ENCODE measurements at regions of chr7 and their contacts with region 1.

Region 1: DNA sequence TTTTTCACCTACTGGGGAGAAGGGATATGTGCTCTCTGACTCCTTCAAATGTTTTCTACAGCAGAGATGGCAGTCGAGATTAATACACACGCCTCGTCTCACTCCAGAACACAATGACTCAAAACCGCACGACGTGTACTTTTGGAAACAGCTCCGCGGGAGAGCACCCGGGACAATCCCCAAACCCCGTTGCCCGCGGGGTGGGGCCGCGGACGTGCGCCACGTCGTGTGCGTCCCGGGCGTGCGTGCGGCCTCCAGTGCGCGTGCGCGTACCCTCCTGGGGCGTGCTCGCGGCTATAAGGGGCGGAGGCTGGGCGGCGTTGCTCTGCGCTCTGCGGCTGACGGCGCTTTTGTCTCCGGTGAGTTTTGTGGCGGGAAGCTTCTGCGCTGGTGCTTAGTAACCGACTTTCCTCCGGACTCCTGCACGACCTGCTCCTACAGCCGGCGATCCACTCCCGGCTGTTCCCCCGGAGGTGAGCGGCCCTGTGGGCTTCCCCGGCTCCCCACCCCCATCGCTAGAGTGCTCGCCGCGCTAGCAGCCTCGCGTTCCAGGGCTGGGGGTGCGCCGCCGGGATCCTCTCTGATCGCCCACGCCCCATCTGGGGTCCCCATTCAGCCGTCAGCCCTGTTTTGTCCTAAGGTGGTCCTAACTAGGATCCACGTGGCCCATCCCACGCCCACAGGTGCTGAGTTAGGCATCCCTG is at the start of gene HILPDA:
- DNase-seq: peak; percentile 97
- ATAC-seq: peak; percentile 91
- H3K4me3 ChIP-seq: peak within 1 kb of the TSS; percentile 62 to 87 (median 82)
- H3K4me3 Mint-ChIP-seq: peak within 1 kb of the TSS; percentile 96
- H3K27ac ChIP-seq: peak within 1 kb of the TSS; percentile 88 to 93
- H3K27ac Mint-ChIP-seq: peak within 1 kb of the TSS; percentile 99
- H3K4me1 ChIP-seq: peaks cover 22 to 24% of the 10 kb centered on the region in 2 donors
- H3K4me1 Mint-ChIP-seq: peaks cover 26% of the 10 kb centered on the region
- H3K27me3 ChIP-seq: no peaks in the 10 kb centered on the region
- H3K27me3 Mint-ChIP-seq: no peaks in the 10 kb centered on the region
- CTCF ChIP-seq: no peak
- total RNA-seq, gene HILPDA: 10.1 and 10.7 TPM in 2 replicates

Region 2: GRCh38 chr7:128343554-128344430 is 111.9 kb before region 1 on chr7 and contains the start of gene RBM28:
- CTCF ChIA-PET with region 1: interaction called, 6 read pairs
- POLR2A ChIA-PET with region 1: no interaction called
- intact Hi-C with region 1: loop called (anchors 5 kb)
- DNase-seq: peak; percentile 95
- ATAC-seq: peak; percentile 95
- H3K4me3 ChIP-seq: peak within 1 kb of the TSS; percentile 75 to 91 (median 81)
- H3K4me3 Mint-ChIP-seq: peak within 1 kb of the TSS; percentile 98
- H3K27ac ChIP-seq: peak within 1 kb of the TSS; percentile 71 to 76
- H3K27ac Mint-ChIP-seq: peak within 1 kb of the TSS; percentile 96
- H3K4me1 ChIP-seq: peaks cover 15 to 19% of the 10 kb centered on the region in 2 donors
- H3K4me1 Mint-ChIP-seq: peaks cover 28% of the 10 kb centered on the region
- H3K27me3 ChIP-seq: peaks cover 0 to 11% (median 1%) of the 10 kb centered on the region in 4 experiments
- H3K27me3 Mint-ChIP-seq: peaks cover 14% of the 10 kb centered on the region
- CTCF ChIP-seq: no peak
- total RNA-seq, gene RBM28: 46.2 and 52.8 TPM in 2 replicates

Region 3: GRCh38 chr7:128398016-128398840 is 57.5 kb before region 1 on chr7:
- CTCF ChIA-PET with region 1: interaction called, 71 read pairs
- POLR2A ChIA-PET with region 1: no interaction called
- intact Hi-C with region 1: loop called (anchors 1 kb)
- DNase-seq: peak; percentile 57
- ATAC-seq: peak; percentile 65
- H3K4me3 ChIP-seq: no peak overlapping the region
- H3K4me3 Mint-ChIP-seq: no peak overlapping the region
- H3K27ac ChIP-seq: no peak overlapping the region
- H3K27ac Mint-ChIP-seq: no peak overlapping the region
- H3K4me1 ChIP-seq: no peaks in the 10 kb centered on the region
- H3K4me1 Mint-ChIP-seq: no peaks in the 10 kb centered on the region
- H3K27me3 ChIP-seq: no peaks in the 10 kb centered on the region
- H3K27me3 Mint-ChIP-seq: no peaks in the 10 kb centered on the region
- CTCF ChIP-seq: peak; percentile 88

Region 4: DNA sequence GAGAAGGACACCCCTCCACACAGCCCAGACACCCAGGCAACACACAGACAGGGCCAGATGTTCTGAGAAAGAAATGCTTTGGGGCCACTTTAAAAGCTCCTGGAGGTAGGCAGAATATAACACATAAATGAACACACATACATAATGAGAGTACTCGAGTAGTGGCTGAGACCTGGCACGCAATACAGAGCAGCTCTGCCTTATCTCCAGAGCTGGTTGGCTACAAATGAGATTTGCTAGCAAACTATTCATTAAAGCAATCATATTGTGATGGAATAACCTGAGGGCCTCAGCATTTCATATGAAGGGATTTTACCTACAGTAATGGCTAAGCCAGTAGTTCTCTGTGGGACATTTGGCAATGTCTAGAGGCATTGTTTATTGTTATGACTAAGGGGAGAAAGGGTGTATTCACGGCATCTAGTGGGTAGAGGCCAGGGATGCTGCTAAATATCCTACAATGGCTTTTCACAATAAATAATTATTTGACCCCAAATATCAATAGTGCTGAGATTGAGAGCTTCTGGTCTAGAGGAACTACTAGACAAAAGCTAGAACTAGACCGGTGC is 40.4 kb before region 1 on chr7:
- CTCF ChIA-PET with region 1: interaction called, 541 read pairs
- POLR2A ChIA-PET with region 1: no interaction called
- intact Hi-C with region 1: loop called (anchors 1 kb)
- DNase-seq: no peak
- ATAC-seq: no peak
- H3K4me3 ChIP-seq: no peak overlapping the region
- H3K4me3 Mint-ChIP-seq: no peak overlapping the region
- H3K27ac ChIP-seq: no peak overlapping the region
- H3K27ac Mint-ChIP-seq: no peak overlapping the region
- H3K4me1 ChIP-seq: peaks cover 3 to 10% of the 10 kb centered on the region in 2 donors
- H3K4me1 Mint-ChIP-seq: peaks cover 3% of the 10 kb centered on the region
- H3K27me3 ChIP-seq: peaks cover 0 to 4% (median 0%) of the 10 kb centered on the region in 4 experiments
- H3K27me3 Mint-ChIP-seq: peaks cover 4% of the 10 kb centered on the region
- CTCF ChIP-seq: no peak

Region 5: DNA sequence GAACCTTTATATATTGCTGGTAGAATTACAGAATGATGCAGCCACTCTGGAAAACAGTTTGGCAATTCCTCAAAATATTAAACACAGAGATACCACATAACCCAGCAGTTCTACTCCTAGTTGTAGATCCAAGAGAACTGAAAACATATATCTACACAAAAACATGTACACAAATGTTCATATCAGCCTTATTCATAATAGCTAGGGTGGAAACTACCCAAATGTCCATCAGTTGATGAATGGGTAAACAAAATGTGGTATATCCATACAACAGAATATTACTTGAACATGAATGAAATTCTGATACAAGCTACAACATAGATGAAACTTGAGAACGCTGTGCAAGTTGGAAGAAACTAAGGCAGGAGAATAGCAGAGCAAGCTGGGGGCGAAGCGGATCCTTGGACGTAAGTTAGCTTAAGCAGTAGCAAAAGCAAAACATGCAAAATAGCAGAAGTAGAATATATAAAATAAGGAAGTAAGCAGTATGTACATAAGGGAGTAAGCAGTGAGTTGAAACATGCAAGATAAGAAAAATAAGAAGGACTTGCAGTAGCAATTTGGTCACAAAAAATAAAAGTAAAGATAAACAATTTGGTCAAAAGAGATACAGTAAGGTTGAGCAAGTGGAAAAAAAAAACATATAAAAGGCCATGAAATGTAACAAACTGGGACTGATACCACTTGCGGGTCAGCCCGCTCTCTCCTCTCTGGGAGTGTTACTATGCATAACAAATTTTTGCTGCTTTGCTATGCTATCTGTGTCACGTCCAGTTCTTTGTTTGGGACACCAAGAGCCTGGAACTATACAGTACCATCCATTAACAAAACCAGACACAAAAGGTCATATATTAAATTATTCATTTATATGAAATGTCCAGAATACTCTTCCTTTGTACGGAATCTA is 18.0 kb before region 1 on chr7:
- CTCF ChIA-PET with region 1: interaction called, 541 read pairs
- POLR2A ChIA-PET with region 1: interaction called, 4 read pairs
- intact Hi-C with region 1: loop called (anchors 1 kb)
- DNase-seq: peak; percentile 68
- ATAC-seq: peak; percentile 93
- H3K4me3 ChIP-seq: peak overlapping the region in 4 of 5 experiments; percentile 11 to 55 (median 38)
- H3K4me3 Mint-ChIP-seq: peak overlapping the region; percentile 65
- H3K27ac ChIP-seq: peak overlapping the region; percentile 60 to 65
- H3K27ac Mint-ChIP-seq: peak overlapping the region; percentile 87
- H3K4me1 ChIP-seq: peaks cover 19 to 24% of the 10 kb centered on the region in 2 donors
- H3K4me1 Mint-ChIP-seq: peaks cover 23% of the 10 kb centered on the region
- H3K27me3 ChIP-seq: no peaks in the 10 kb centered on the region
- H3K27me3 Mint-ChIP-seq: no peaks in the 10 kb centered on the region
- CTCF ChIP-seq: no peak

Region 6: DNA sequence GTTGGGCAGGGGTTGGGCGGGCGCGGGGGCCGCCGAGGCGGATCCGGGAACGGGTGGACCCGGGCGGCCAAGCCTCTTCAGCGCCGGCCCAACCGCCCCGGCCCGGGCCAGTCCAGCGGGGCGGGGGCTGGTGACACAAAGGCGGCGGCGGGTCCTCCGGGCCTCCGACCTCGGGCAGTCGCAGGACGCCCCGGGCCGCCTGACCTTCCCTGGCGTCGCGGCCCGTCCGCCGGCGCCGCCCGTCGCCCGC is 75.1 kb after region 1 on chr7:
- CTCF ChIA-PET with region 1: no interaction called
- POLR2A ChIA-PET with region 1: no interaction called
- intact Hi-C with region 1: loop called (anchors 2 kb)
- DNase-seq: no peak
- ATAC-seq: no peak
- H3K4me3 ChIP-seq: peak overlapping the region in 4 of 5 experiments; percentile 42 to 72 (median 68)
- H3K4me3 Mint-ChIP-seq: no peak overlapping the region
- H3K27ac ChIP-seq: peak overlapping the region; percentile 55 to 87
- H3K27ac Mint-ChIP-seq: no peak overlapping the region
- H3K4me1 ChIP-seq: peaks cover 13 to 18% of the 10 kb centered on the region in 2 donors
- H3K4me1 Mint-ChIP-seq: peaks cover 32% of the 10 kb centered on the region
- H3K27me3 ChIP-seq: no peaks in the 10 kb centered on the region
- H3K27me3 Mint-ChIP-seq: no peaks in the 10 kb centered on the region
- CTCF ChIP-seq: no peak